ENCODE measurements at regions of chr1 and their contacts with region 1.

Region 1: GRCh38 chr1:242017584-242018233 is 18.8 kb upstream of the MAP1LC3C start:
- DNase-seq: peak; percentile 69
- H3K4me3 ChIP-seq: no peak overlapping the region
- H3K27ac ChIP-seq: no peak overlapping the region
- H3K4me1 ChIP-seq: peaks cover 0 to 5% (median 0%) of the 10 kb centered on the region in 6 donors
- H3K27me3 ChIP-seq: no peaks in the 10 kb centered on the region
- CTCF ChIP-seq: peak in 10 of 11 experiments; percentile 9 to 62 (median 52)
- POLR2A ChIP-seq: no peak

Region 2: DNA sequence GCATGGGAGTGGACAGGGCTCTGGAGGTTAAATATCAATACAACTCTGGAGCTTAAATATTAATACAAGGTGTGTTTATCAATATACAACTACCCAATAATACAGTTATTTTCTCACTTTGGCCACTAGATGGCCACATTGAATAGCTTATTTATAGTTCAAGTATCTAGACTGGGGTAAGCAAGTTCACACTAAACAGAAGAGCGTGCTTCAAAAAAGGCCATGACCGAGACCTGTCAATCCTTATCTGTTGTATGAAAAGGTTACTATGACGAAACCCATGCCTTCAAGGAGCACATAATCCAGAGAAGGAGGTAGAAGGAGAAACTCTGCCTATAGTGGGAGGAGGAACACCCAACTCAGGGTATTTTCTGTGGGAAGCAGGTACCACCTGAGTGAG is 406.6 kb before region 1 on chr1:
- intact Hi-C with region 1: loop called (anchors 5 kb)
- DNase-seq: no peak
- H3K4me3 ChIP-seq: no peak overlapping the region
- H3K27ac ChIP-seq: no peak overlapping the region
- H3K4me1 ChIP-seq: peaks cover 0 to 26% (median 6%) of the 10 kb centered on the region in 6 donors
- H3K27me3 ChIP-seq: no peaks in the 10 kb centered on the region
- CTCF ChIP-seq: peak; percentile 26 to 77 (median 63)
- POLR2A ChIP-seq: no peak

Measured in spleen (tissue), 13 donors.